IMR-90 (cell line): ENCODE measurements at regions of chr6 and their contacts with region 1.

Region 1: DNA sequence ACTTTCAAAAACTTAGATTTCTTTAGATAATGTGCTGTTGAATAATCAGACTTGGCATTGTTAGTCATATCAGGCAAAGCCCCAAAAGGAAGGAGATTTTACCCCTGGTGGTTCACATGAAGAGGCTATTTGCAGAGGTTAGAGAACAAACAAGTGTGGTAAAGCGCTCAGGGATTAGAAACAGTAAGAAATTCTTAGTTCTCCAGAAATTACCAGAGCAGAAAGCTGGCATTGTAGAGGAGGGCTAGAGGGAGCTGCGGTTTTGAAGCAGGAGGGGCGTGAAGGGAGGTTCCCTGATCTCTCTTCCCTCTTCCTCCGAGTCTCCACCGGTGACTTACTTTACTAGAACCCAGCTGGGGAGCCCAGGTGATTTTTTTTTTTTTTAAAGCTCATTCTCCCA is 10.2 kb downstream of the MYO6 start:
- DNase-seq: no peak
- ATAC-seq: no peak
- H3K4me3 ChIP-seq: no peak overlapping the region
- H3K27ac ChIP-seq: no peak overlapping the region
- H3K4me1 ChIP-seq: no peaks in the 10 kb centered on the region
- H3K27me3 ChIP-seq: no peaks in the 10 kb centered on the region
- CTCF ChIP-seq: no peak
- POLR2A ChIP-seq: no peak
- RAD21 ChIP-seq: no peak

Region 2: GRCh38 chr6:75284632-75285286 is 474.4 kb before region 1 on chr6 and contains the start of gene TMEM30A:
- CTCF ChIA-PET with region 1: no interaction called
- POLR2A ChIA-PET with region 1: no interaction called
- dilution Hi-C with region 1: no loop called
- in situ Hi-C with region 1: no loop called
- intact Hi-C with region 1: loop called (anchors 10 kb)
- DNase-seq: peak; percentile 99
- ATAC-seq: peak; percentile 99
- H3K4me3 ChIP-seq: peak within 1 kb of the TSS; percentile 95
- H3K27ac ChIP-seq: peak within 1 kb of the TSS; percentile 95
- H3K4me1 ChIP-seq: no peaks in the 10 kb centered on the region
- H3K27me3 ChIP-seq: no peaks in the 10 kb centered on the region
- CTCF ChIP-seq: no peak
- POLR2A ChIP-seq: peak; percentile 84
- RAD21 ChIP-seq: no peak
- total RNA-seq, gene TMEM30A: 111 and 206 TPM in 2 replicates